ENCODE measurements at regions of chr12 and their contacts with region 1.

Region 1: GRCh38 chr12:5624486-5625272 is 192.8 kb downstream of the NTF3 start:
- DNase-seq: peak; percentile 37
- H3K4me3 ChIP-seq: no peak overlapping the region
- H3K27ac ChIP-seq: peak overlapping the region; percentile 34
- H3K4me1 ChIP-seq: peaks cover 16% of the 10 kb centered on the region
- H3K27me3 ChIP-seq: no peaks in the 10 kb centered on the region
- CTCF ChIP-seq: no peak
- POLR2A ChIP-seq: no peak

Region 2: DNA sequence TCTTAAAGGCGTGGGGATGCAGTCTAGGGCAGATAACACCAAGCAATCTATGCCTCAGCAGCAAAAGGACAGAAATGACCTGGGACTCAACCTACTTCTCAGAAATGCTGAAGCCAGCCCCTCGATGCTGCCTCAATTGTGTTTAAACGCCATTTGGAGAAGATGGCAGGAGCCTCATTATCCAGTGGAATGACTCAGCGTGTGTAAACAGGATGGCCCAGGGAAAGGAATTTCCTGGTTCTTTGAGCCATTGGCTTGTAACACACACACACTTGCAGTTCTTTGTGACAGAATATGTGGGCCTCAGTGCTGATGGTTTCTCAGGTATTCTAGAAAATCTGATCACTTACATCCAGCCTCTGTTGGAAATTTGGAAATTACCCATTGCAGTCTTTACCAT is 38.5 kb before region 1 on chr12:
- CTCF ChIA-PET with region 1: no interaction called
- POLR2A ChIA-PET with region 1: no interaction called
- dilution Hi-C with region 1: no loop called
- intact Hi-C with region 1: loop called (anchors 2 kb)
- DNase-seq: peak; percentile 92
- H3K4me3 ChIP-seq: no peak overlapping the region
- H3K27ac ChIP-seq: peak overlapping the region; percentile 95
- H3K4me1 ChIP-seq: peaks cover 67% of the 10 kb centered on the region
- H3K27me3 ChIP-seq: no peaks in the 10 kb centered on the region
- CTCF ChIP-seq: no peak
- POLR2A ChIP-seq: peak; percentile 52